ENCODE measurements at regions of chr4 and their contacts with region 1.

Region 1: GRCh38 chr4:101347557-101348366 is 436 bp upstream of the PPP3CA start:
- ATAC-seq: peak; percentile 74 to 79 (median 77)
- H3K4me3 ChIP-seq: peak overlapping the region; percentile 74 to 95 (median 82)
- H3K27ac ChIP-seq: peak overlapping the region; percentile 86 to 92
- H3K4me1 ChIP-seq: peaks cover 6 to 7% of the 10 kb centered on the region in 2 donors

Region 2: DNA sequence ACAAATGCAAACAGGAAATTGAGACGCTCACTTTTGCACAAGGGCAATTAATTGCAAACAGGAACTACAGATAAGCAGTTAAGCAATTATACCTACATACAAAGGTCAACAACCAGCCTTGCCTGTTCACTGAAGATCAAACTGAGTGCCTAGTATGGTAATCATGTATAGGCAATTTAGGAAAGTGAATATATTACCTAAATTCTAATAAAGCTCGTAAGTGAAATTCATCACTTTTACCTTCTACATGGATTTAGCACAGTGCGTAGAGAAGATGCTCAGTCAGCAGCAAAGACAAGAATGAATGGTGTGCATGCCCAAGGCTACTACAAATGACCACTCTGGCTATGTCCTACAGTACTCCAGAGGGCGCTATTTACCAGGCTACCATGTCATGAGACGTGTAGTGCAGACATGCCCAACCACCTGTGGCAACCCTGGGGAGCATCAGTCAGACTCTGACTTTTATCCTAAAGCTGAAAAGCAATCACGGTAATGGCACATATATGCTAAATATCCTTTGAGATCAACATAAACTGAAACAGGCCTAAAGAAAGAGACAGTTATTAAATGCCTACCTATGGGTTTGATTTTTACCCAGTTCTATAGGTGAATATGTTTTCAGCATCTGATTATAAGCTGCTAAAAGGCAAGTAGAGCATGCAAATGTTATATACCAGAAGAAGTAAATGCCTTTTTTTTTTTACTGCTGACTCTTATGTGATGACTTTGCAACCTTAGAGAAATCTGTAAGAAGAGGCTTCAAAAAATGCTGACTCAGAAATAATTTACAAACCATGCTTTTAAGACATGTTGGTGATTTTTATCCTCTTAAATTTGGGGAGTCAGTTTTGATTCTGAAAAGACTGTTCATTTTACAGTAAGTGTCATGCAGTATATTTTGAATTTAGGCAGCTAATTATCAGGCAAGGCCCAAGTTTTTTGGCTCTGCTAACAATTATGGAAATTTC is 178.4 kb before region 1 on chr4:
- in situ Hi-C with region 1: loop called in 1 of 9 experiments (anchors 25 kb)
- ATAC-seq: peak; percentile 56 to 99 (median 84)
- H3K4me3 ChIP-seq: no peak overlapping the region
- H3K27ac ChIP-seq: no peak overlapping the region
- H3K4me1 ChIP-seq: no peaks in the 10 kb centered on the region

Region 3: DNA sequence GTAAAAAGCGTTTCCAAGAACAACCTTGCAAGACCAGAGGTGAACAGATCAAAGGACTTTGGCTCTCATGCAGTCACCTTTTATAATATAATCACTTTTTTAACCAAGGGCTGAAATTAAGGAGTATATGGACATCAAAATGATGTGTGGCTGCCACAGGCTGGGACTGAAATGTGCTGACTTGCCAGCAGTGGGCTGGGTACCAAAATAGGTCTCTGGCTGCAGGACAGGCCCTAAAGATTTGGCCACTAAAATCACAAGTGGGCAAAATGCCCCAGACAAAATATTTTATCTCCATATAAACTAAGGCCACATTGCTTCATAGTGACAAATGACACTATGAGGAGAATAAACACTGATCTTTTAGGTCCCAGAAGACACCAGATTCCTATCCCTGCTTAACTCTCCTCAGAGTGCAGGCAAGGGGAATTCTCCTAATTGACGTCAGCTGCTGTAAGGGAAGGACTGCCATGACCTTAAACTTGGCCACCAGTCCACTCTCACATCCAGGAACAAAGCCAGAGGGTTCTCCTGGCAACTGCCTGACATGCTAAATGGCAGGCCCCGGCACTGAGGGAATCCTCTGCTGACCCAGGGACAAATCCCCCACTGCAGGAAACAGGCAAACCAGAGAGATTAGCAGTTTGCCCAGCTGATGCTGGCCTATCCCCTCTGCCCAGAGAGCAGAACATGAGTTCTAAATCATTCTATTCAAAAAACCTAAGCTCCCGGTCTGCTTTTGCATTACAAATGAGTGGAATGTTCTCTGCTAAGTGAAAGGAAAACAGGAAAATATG is 156.3 kb before region 1 on chr4:
- in situ Hi-C with region 1: loop called in 1 of 9 experiments (anchors 25 kb)
- ATAC-seq: peak; percentile 92 to 98 (median 94)
- H3K4me3 ChIP-seq: no peak overlapping the region
- H3K27ac ChIP-seq: no peak overlapping the region
- H3K4me1 ChIP-seq: peaks cover 14 to 17% of the 10 kb centered on the region in 2 donors

Measured in motor neuron (in vitro differentiated cells).